Thyroid gland (tissue), 4 donors: ENCODE measurements at regions of chr4 and their contacts with region 1.

Region 1: GRCh38 chr4:25172961-25173915 is 13.0 kb upstream of the SEPSECS start:
- DNase-seq: no peak
- H3K4me3 ChIP-seq: no peak overlapping the region
- H3K27ac ChIP-seq: peak overlapping the region in 1 of 3 donors; percentile 43
- H3K4me1 ChIP-seq: no peaks in the 10 kb centered on the region
- H3K27me3 ChIP-seq: no peaks in the 10 kb centered on the region
- CTCF ChIP-seq: no peak
- POLR2A ChIP-seq: no peak

Region 2: GRCh38 chr4:25367004-25367621 is 193.9 kb after region 1 on chr4:
- intact Hi-C with region 1: loop called (anchors 10 kb)
- DNase-seq: no peak
- H3K4me3 ChIP-seq: no peak overlapping the region
- H3K27ac ChIP-seq: no peak overlapping the region
- H3K4me1 ChIP-seq: no peaks in the 10 kb centered on the region
- H3K27me3 ChIP-seq: no peaks in the 10 kb centered on the region
- CTCF ChIP-seq: peak in 5 of 6 experiments; percentile 29 to 75 (median 64)
- POLR2A ChIP-seq: no peak

Region 3: GRCh38 chr4:25400699-25401399 is 227.6 kb after region 1 on chr4:
- intact Hi-C with region 1: no loop called
- DNase-seq: no peak
- H3K4me3 ChIP-seq: no peak overlapping the region
- H3K27ac ChIP-seq: no peak overlapping the region
- H3K4me1 ChIP-seq: no peaks in the 10 kb centered on the region
- H3K27me3 ChIP-seq: no peaks in the 10 kb centered on the region
- CTCF ChIP-seq: no peak
- POLR2A ChIP-seq: no peak